ENCODE measurements at regions of chr10 and their contacts with region 1.

Region 1: DNA sequence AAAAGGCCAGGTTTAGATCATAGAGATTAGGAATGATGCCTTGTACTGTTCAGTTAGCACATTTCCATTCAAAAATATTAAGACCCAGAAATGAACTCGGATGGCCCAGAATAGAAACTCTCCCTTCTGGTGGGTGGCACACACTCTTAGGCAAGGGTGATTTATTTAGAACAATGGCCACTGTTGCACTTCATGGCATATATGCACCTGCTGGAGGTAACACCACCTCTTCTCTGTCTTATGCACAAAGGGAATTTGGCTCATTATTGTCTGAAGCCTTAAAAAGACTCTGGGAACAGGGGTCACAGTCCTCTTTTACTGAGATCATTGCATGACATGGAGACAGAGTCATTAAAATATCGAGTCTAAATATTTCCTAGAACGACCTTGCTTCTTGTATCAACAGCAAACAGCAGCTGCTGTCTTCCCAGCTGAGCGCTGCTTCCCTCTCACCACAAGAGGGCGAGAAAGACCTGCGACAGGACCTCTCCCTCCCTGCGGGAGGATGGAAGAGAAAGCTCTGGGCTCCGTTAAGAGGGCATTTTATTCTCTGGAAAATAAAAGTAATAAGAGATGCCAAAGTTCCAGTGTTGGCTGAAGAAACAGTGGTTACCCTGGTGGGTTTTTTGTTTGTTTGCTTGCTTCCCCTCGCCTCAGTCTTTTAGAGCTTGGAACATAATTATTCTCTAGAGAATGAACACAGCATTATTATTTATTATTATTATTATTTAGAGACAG is 13.6 kb upstream of the BAMBI start:
- DNase-seq: peak; percentile 67 to 69
- ATAC-seq: peak; percentile 96

Region 2: GRCh38 chr10:28991326-28992270 is 327.9 kb after region 1 on chr10:
- intact Hi-C with region 1: loop called in 1 of 2 experiments (anchors 5 kb)
- DNase-seq: peak in 1 of 2 donors; percentile 44
- ATAC-seq: peak; percentile 89

Region 3: DNA sequence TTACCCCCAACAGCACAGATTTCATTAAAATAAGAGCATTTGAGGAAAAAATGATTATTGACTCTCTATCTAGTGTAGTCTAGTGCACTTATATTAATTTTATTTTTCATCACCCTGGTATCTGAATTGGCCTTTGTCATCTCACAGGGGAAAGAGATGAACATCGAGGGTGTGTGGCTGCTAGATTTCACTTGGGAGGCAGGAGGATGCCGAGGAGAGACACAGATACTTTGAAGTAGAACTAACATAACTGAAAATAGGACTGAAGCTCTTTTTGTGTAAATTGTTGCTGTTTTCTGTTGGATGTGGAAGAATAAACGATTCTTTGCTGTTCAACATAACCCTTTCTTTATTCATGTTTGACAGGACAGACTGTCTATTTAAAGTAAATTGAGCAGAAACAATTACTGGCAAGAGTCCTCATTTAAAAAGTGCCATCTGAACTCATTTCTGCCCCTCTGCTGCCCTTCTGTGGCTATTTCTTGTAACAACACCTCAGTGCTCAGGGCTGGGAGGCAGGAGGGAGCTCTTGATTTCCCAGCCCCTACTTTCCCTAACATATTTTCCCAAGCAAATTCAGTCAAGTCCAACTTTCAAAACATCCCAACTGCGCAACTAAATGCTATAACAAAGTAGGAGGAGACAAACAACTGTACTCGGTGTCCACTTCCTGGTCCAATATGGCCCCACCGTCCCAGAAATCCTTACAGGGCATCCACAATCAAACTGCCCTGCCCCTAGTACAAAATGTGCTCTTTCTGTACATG is 640.7 kb after region 1 on chr10:
- intact Hi-C with region 1: loop called in 1 of 2 experiments (anchors 5 kb)
- DNase-seq: peak in 1 of 2 donors; percentile 18
- ATAC-seq: peak; percentile 65